Sciatic nerve (tissue), 2 donors: ENCODE measurements at regions of chr12 and their contacts with region 1.

Region 1: DNA sequence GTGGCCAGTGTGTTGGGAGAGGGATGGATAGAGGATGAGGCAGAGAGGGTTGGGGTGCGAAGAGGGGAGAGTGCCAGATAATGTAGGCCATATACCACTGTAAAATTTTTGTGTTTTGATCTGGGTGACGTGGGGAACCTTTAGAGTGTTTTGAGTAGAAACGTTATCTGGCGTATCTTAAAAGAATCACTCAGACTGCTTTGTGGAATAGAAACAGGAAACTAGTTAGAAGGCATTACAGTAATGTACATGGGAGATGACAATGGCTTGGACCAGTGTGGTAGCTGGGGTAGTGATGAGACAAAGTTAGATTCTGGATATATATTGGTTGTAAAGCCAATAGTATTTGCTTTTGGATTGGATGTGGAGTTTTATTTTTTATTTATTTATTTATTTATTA is 20.6 kb downstream of the ATF1 start:
- DNase-seq: no peak
- ATAC-seq: no peak

Region 2: GRCh38 chr12:51496895-51497294 is 712.4 kb after region 1 on chr12:
- intact Hi-C with region 1: loop called (anchors 5 kb)
- DNase-seq: no peak
- ATAC-seq: no peak